GM13976 (cell line): ENCODE measurements at regions of chr15 and their contacts with region 1.

Region 1: DNA sequence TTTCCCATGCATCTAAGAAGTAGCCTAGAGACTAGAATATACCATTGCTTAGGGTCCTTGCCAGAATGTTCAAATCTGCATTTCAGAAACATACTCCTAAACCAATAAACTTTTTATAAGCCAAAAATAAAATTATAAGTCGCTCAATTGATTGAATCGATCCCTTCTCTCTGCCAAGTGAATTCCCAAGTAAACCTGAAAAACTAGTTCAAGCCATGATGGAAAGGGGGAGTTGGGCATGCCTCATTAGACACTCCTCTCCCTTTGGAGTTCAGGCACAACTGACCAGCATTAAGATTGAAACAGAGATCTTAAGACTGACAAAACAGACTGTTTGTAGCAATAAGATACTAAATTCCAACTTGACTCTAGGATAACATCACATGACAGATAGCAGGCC is 113.6 kb upstream of the RASGRP1 start:
- DNase-seq: no peak
- CTCF ChIP-seq: no peak

Region 2: DNA sequence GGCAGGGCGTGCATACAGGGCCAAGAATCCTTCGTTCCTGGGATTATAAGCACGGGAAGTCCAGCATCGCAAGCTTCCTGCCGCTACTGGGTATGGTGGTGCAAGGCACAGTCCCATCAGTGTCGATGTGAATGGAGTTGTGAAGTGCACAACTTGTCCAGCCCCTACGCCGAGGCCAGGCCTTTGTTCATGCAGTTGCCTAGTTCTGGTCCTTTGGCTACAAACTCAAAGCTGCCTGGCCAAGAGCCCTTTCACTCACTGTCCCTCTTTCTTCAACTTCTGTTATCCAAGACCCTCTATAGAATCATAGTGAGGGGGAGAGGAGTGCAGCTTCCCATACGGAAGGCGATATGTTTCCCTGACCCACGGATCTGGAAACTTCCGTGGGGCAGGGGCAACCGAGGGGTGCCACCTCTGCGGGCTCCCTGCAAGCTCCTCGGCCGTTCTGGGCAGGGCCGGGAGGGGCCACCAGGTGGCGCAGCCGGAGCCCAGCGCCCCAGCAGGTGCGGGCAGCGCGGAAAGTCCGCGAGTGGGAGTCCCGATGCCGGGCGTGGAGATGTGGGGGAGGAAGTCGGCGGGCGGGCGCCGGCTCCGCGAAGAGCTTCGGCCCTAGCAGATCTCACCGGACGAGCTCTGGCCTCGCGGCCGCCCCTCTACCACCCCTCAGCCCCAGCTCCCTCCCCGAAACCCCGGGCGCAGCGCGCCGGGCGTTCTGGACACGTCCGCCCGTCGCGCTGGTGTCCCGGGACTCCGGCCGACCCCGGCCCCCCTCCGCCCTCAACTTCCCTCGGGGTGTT is 114.3 kb before region 1 on chr15:
- in situ Hi-C with region 1: loop called (anchors 5 kb)
- DNase-seq: peak; percentile 85
- CTCF ChIP-seq: peak; percentile 96

Region 3: GRCh38 chr15:39171944-39172368 is 493.7 kb after region 1 on chr15:
- in situ Hi-C with region 1: no loop called
- DNase-seq: no peak
- CTCF ChIP-seq: no peak